PC-9 (cell line): ENCODE measurements at regions of chr12 and their contacts with region 1.

Region 1: DNA sequence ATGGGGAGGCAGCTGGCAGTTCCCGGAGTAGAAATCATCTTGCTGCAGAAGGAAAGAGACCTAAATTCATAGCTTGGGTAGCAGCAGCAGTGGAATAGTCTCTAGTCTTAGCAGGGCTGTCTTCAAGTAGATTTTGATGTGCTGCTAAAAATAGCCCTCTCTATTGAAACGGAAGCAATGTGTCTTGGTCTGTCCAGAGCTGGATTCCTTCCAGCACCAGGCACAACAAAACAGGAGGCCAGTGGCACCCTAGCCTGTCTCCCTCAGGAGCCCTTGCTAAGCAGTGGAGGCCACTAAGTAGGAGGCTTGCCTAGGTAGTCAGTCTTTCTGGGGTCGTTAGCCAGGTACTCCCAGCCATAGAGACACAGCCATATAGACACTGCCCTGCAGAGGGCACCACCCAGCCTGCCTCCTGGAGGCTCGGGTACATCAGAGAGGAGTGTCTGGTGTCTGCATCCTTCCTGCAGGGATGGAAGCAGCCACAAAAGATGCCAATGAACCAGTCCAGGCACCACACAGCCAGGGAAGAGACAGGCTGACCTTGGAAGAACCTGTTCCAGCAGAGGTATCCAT is 97.5 kb downstream of the CRACR2A start:
- DNase-seq: no peak
- H3K4me3 ChIP-seq: no peak overlapping the region
- H3K27ac ChIP-seq: no peak overlapping the region
- H3K4me1 ChIP-seq: no peaks in the 10 kb centered on the region
- H3K27me3 ChIP-seq: peaks cover 99% of the 10 kb centered on the region
- CTCF ChIP-seq: no peak; the same call in 1 of the 2 replicates

Region 2: GRCh38 chr12:3617565-3617964 is 37.8 kb before region 1 on chr12:
- CTCF ChIA-PET with region 1: no interaction called
- POLR2A ChIA-PET with region 1: no interaction called
- intact Hi-C with region 1: loop called (anchors 1 kb)
- DNase-seq: no peak
- H3K4me3 ChIP-seq: no peak overlapping the region
- H3K27ac ChIP-seq: no peak overlapping the region
- H3K4me1 ChIP-seq: no peaks in the 10 kb centered on the region
- H3K27me3 ChIP-seq: peaks cover 93% of the 10 kb centered on the region
- CTCF ChIP-seq: no peak

Region 3: DNA sequence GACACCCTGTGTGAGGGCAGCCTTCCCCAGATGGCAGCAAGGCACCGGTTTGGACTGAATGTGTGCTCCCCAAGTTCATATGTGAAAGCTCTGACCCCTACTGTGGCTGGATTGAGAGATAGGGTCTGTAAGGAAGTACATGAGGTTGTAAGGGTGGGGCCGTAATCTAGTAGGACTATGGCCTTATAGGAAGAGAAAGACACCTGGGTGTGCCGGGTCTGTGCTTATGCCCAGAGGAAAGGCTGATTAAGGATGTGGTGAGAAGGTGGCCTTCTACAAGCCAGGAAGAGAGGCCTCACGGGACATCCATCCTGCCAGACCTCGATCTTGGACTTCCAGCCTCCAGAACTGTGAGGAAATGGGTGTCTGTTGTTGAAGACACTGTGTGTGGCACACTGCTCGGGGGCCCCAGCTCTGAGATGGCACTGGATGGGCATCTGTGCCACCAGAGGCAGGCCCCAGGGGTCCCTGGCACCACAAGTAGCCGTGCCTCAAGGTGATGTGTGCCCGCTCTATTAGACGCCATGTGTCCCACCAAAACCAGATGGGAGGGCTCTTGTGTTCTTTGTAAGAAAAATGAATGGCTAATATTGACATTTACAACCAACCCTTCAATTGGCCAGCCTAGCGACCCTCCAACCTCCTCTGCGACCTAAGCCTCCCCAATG is 768.2 kb after region 1 on chr12:
- CTCF ChIA-PET with region 1: no interaction called
- POLR2A ChIA-PET with region 1: no interaction called
- intact Hi-C with region 1: no loop called
- DNase-seq: no peak
- H3K4me3 ChIP-seq: no peak overlapping the region
- H3K27ac ChIP-seq: no peak overlapping the region
- H3K4me1 ChIP-seq: no peaks in the 10 kb centered on the region
- H3K27me3 ChIP-seq: peaks cover 83% of the 10 kb centered on the region
- CTCF ChIP-seq: no peak